HEK293 (cell line): ENCODE measurements at regions of chr7 and their contacts with region 1.

Region 1: DNA sequence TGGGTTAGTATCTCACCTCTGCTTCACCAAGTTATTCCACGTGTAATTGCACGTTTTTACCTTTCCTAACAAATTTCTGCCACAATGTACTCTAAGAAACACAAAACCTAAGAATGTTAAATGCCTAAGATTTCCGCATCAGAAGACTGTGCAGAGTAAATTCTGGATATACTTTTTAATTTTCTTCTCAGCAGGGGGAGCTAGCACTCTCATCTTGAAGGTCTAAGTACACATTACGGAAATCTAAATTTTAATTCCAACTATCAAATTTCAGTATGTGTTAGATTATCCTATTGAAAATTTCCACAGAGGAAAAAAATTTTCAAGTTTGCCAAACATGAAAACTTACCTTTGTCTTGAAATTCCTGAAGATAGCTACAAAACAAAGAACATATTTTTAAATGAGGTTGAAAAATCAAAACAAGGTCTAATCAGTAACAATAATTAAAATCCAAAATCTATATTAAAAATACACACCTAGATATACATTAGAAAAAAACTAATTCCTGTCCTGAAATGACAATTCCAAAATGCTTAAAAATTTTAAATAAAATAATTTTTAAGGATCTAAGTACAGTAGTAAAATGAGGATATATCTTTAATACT is 10.5 kb downstream of the SKAP2 start:
- H3K4me3 ChIP-seq: no peak overlapping the region
- H3K27ac ChIP-seq: no peak overlapping the region
- H3K4me1 ChIP-seq: peaks cover 42% of the 10 kb centered on the region
- CTCF ChIP-seq: no peak

Region 2: GRCh38 chr7:26603631-26604030 is 250.3 kb before region 1 on chr7:
- CTCF ChIA-PET with region 1: no interaction called
- POLR2A ChIA-PET with region 1: no interaction called
- H3K4me3 ChIP-seq: no peak overlapping the region
- H3K27ac ChIP-seq: no peak overlapping the region
- H3K4me1 ChIP-seq: no peaks in the 10 kb centered on the region
- CTCF ChIP-seq: no peak

Region 3: GRCh38 chr7:26681819-26682418 is 172.0 kb before region 1 on chr7:
- CTCF ChIA-PET with region 1: interaction called, 15 read pairs
- POLR2A ChIA-PET with region 1: no interaction called
- H3K4me3 ChIP-seq: no peak overlapping the region
- H3K27ac ChIP-seq: no peak overlapping the region
- H3K4me1 ChIP-seq: peaks cover 33% of the 10 kb centered on the region
- CTCF ChIP-seq: no peak

Region 4: GRCh38 chr7:26789481-26790184 is 64.3 kb before region 1 on chr7:
- CTCF ChIA-PET with region 1: no interaction called
- POLR2A ChIA-PET with region 1: no interaction called
- H3K4me3 ChIP-seq: no peak overlapping the region
- H3K27ac ChIP-seq: no peak overlapping the region
- H3K4me1 ChIP-seq: peaks cover 15% of the 10 kb centered on the region
- CTCF ChIP-seq: no peak

Region 5: GRCh38 chr7:26864309-26865093 is 10.6 kb after region 1 on chr7 and contains the start of gene SKAP2:
- CTCF ChIA-PET with region 1: interaction called, 10 read pairs
- POLR2A ChIA-PET with region 1: interaction called, 3 read pairs
- H3K4me3 ChIP-seq: peak within 1 kb of the TSS; percentile 89
- H3K27ac ChIP-seq: peak within 1 kb of the TSS; percentile 94
- H3K4me1 ChIP-seq: peaks cover 17% of the 10 kb centered on the region
- CTCF ChIP-seq: no peak